Aorta (tissue), 5 donors: ENCODE measurements at regions of chr3 and their contacts with region 1.

Region 1: DNA sequence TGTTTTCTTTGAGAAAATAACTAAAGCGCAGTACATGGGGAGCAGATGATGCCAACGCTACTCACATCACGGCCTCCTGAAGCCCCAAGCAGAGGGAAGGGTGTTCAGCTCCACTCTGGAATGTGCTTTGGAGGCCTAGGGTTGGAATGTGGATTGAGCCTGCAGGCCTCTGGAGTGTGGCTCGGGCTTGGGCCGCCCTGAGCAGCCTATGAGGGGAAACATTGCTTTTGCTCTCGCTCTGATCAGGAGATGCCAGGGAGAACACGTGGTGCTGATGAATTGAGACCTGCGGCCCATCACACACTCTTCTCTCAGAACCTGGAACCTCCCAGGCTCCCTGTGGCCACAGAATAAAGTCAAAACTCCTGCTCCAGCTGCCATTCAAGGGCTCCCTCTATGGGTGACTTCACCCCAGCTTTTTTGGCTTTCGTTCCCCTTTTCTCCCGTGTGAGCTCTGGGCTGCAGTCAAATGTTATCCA is 23.3 kb downstream of the CCDC13 start:
- DNase-seq: peak in 1 of 2 donors; percentile 62
- ATAC-seq: peak; percentile 34
- H3K4me3 ChIP-seq: no peak overlapping the region
- H3K27ac ChIP-seq: peak overlapping the region in 1 of 2 donors; percentile 61
- H3K4me1 ChIP-seq: peaks cover 6 to 8% of the 10 kb centered on the region in 2 donors
- H3K27me3 ChIP-seq: no peaks in the 10 kb centered on the region

Region 2: DNA sequence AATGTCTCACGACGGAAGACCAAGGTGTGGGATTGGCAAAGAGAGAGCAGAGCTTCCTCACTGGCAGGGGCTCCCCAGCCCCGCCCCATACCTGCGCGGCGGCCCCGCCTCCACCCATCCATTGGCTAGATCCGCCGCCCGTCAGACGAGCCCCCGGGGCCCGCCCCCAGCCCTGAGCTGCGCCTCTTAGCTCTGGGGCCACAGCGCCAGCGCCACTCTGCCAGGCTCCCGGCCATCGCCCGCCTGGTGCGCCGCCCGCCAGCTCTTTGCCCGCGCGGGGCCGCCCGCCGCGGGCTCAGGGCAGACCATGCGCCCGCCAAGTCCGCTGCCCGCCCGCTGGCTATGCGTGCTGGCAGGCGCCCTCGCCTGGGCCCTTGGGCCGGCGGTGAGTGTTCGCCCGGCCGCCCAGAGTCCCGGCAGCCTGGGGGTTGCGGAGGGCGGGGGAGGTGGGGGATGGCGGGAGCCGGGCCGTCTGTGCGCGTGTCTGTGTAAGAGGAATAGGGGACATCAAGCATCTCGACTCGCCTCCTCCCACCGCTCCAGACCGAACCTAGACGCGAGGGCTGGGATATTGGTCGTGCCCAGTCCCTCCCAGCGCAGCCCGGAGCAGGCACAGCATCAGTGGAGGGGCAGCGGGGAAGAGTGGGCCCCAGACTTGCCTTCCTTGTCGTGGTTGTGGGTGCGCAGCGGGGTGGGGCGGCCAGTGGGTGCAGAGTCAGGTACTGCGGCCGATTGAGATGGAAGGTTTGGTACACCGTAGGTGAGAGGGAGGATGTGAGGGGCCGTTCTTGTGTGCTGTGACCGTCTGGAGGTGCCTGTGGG is 247.2 kb before region 1 on chr3 and contains the start of gene VIPR1:
- intact Hi-C with region 1: loop called in 1 of 2 experiments (anchors 5 kb)
- DNase-seq: peak; percentile 87 to 91
- ATAC-seq: peak; percentile 83
- H3K4me3 ChIP-seq: peak within 1 kb of the TSS in 1 of 2 donors; percentile 15
- H3K27ac ChIP-seq: no peak within 1 kb of the TSS
- H3K4me1 ChIP-seq: no peaks in the 10 kb centered on the region
- H3K27me3 ChIP-seq: no peaks in the 10 kb centered on the region
- total RNA-seq, gene VIPR1: 3.2 to 7.6 TPM

Region 3: GRCh38 chr3:42581709-42582473 is 167.9 kb before region 1 on chr3 and contains the start of gene SEC22C:
- intact Hi-C with region 1: loop called in 1 of 2 experiments (anchors 10 kb)
- DNase-seq: peak; percentile 97 to 98
- ATAC-seq: peak; percentile 98
- H3K4me3 ChIP-seq: peak within 1 kb of the TSS; percentile 68 to 84
- H3K27ac ChIP-seq: peak within 1 kb of the TSS; percentile 19 to 77
- H3K4me1 ChIP-seq: peaks cover 0 to 2% of the 10 kb centered on the region in 2 donors
- H3K27me3 ChIP-seq: no peaks in the 10 kb centered on the region
- total RNA-seq, gene SEC22C: 43.6 to 46.6 TPM

Region 4: GRCh38 chr3:42600111-42600988 is 149.4 kb before region 1 on chr3 and contains the start of gene NKTR:
- intact Hi-C with region 1: loop called in 1 of 2 experiments (anchors 5 kb)
- DNase-seq: peak; percentile 97 to 99
- ATAC-seq: peak; percentile 98
- H3K4me3 ChIP-seq: peak within 1 kb of the TSS; percentile 62 to 73
- H3K27ac ChIP-seq: peak within 1 kb of the TSS; percentile 65 to 95
- H3K4me1 ChIP-seq: peaks cover 0 to 2% of the 10 kb centered on the region in 2 donors
- H3K27me3 ChIP-seq: no peaks in the 10 kb centered on the region
- total RNA-seq, gene NKTR: 98.5 to 163 TPM

Region 5: GRCh38 chr3:42652611-42653302 is 97.0 kb before region 1 on chr3:
- intact Hi-C with region 1: loop called in 1 of 2 experiments (anchors 2 kb)
- DNase-seq: peak in 1 of 2 donors; percentile 85
- ATAC-seq: peak; percentile 73
- H3K4me3 ChIP-seq: peak overlapping the region; percentile 8 to 68
- H3K27ac ChIP-seq: peak overlapping the region; percentile 14 to 94
- H3K4me1 ChIP-seq: peaks cover 0 to 2% of the 10 kb centered on the region in 2 donors
- H3K27me3 ChIP-seq: no peaks in the 10 kb centered on the region

Region 6: GRCh38 chr3:42683875-42684598 is 65.8 kb before region 1 on chr3:
- intact Hi-C with region 1: loop called in 1 of 2 experiments (anchors 10 kb)
- DNase-seq: peak; percentile 85 to 88
- ATAC-seq: peak; percentile 88
- H3K4me3 ChIP-seq: no peak overlapping the region
- H3K27ac ChIP-seq: no peak overlapping the region
- H3K4me1 ChIP-seq: peaks cover 0 to 3% of the 10 kb centered on the region in 2 donors
- H3K27me3 ChIP-seq: no peaks in the 10 kb centered on the region

Region 7: DNA sequence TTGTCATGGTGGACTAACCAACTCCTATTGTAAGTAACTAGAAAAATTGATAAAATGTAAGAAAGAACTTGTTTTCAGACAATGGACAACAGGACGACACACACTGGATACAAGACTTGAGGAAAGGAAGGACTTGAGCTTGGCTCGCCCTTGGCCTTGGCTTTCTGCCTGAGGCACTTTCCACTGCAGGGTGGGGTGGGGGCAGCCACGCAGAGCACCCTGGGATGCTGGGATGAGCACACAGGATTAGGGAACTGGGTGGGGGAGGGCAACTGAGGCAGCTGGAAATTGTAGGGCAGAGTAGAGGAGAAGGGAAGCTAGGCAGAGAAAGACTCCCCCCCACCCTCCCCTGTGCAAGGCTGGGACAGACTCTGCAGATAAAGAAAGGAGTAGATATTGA is 21.7 kb before region 1 on chr3:
- intact Hi-C with region 1: no loop called
- DNase-seq: no peak
- ATAC-seq: peak; percentile 20
- H3K4me3 ChIP-seq: no peak overlapping the region
- H3K27ac ChIP-seq: no peak overlapping the region
- H3K4me1 ChIP-seq: no peaks in the 10 kb centered on the region
- H3K27me3 ChIP-seq: no peaks in the 10 kb centered on the region